Activated naive CD4-positive, alpha-beta T cell treated with anti-CD3 and anti-CD28 coated beads, Interleukin-2, amount 10 ng/mL, durations not matched to agents 7 days and 5 days (primary cell): ENCODE measurements at regions of chr12 and their contacts with region 1.

Region 1: DNA sequence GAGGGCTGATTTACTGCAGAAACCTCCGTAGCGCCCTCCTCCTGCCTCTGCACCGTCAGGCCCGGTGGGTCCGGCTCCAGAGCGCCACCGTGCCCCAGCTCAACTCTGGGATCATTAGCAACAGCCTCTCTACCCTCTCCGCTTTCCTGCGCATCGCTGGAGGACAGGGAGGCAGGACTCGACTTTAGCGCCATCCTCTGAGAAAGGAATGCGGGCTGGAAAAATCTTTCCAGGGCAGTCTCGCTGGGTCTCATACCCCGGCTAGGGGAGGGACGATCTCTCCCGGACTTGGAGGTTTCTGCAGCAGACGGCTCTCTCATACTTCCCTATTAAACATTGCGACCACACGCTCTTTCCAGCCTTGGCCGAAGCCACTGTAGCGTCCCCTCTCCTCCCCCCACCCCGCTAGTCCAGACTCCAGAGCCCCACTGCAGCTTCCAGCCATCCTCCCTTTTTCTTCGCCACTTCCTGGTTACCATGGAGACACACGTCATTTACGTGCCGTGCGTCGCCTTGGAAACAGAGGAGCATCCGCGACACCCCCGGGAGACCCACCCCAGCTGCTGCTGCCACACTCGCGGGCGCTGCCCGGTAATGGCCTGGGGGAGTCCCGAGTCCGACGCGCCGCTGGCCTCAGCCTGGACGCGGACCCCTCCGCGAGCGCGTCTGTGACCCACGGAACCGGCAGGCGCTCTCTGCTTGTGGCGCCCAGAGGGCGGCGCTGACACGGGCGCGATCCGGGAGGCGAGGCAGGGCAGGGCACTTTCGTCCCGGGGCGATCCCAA is at the start of gene CCDC184:
- DNase-seq: peak; percentile 88
- H3K4me3 Mint-ChIP-seq: peak within 1 kb of the TSS; percentile 89
- H3K27ac Mint-ChIP-seq: no peak within 1 kb of the TSS
- H3K4me1 Mint-ChIP-seq: peaks cover 22% of the 10 kb centered on the region
- H3K27me3 Mint-ChIP-seq: peaks cover 90% of the 10 kb centered on the region

Region 2: DNA sequence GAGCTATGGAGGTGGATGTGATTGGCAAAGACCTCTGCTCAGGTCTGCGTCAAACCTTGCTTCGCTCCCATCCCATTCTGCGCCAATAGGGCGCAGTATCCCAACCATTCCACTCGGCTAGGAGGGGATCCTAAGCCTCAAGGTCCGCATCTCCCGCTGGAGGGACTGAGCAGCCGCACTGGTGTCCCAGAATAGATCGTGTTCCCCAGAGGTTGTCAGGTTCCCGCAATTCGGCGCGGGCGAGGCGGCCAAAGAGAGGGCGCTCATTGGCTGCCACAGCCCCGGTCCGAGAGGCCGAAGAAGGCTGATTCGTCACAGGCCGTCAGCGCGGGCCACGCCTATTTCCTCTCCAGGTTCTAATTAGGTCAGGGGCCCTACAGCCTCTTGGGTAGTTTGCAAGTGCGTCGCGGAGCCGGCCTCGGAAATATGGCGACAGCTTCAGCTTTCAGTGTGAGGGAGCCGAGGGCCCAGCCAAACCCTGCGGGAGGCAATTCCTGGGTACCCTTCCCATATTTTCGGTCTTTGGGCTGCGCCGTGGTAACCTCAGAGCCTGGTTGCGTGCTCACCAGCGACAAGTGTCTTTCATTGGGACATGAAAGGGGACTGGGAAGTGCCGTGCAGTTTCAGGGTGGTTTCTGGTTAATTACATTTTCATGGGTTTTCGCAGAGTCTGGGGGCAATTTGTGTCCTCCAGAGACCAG is 14.8 kb after region 1 on chr12:
- CTCF ChIA-PET with region 1: interaction called, 40 read pairs
- DNase-seq: peak; percentile 95
- H3K4me3 Mint-ChIP-seq: peak overlapping the region; percentile 73
- H3K27ac Mint-ChIP-seq: peak overlapping the region; percentile 87
- H3K4me1 Mint-ChIP-seq: peaks cover 51% of the 10 kb centered on the region
- H3K27me3 Mint-ChIP-seq: peaks cover 21% of the 10 kb centered on the region

Region 3: GRCh38 chr12:48350249-48351021 is 167.2 kb after region 1 on chr12 and contains the start of gene ZNF641:
- CTCF ChIA-PET with region 1: no interaction called
- DNase-seq: peak; percentile 87
- H3K4me3 Mint-ChIP-seq: peak within 1 kb of the TSS; percentile 96
- H3K27ac Mint-ChIP-seq: peak within 1 kb of the TSS; percentile 92
- H3K4me1 Mint-ChIP-seq: peaks cover 30% of the 10 kb centered on the region
- H3K27me3 Mint-ChIP-seq: peaks cover 10% of the 10 kb centered on the region

Region 4: GRCh38 chr12:48512855-48513254 is 329.6 kb after region 1 on chr12:
- CTCF ChIA-PET with region 1: no interaction called
- DNase-seq: no peak
- H3K4me3 Mint-ChIP-seq: no peak overlapping the region
- H3K27ac Mint-ChIP-seq: no peak overlapping the region
- H3K4me1 Mint-ChIP-seq: no peaks in the 10 kb centered on the region
- H3K27me3 Mint-ChIP-seq: no peaks in the 10 kb centered on the region